ENCODE measurements at regions of chr11 and their contacts with region 1.

Region 1: GRCh38 chr11:61332797-61333549 is at the starts of genes DDB1 and TKFC:
- DNase-seq: peak; percentile 85
- ATAC-seq: peak; percentile 92
- H3K4me3 Mint-ChIP-seq: peak within 1 kb of the TSS; percentile 92
- H3K27ac Mint-ChIP-seq: peak within 1 kb of the TSS; percentile 93
- H3K4me1 Mint-ChIP-seq: peaks cover 49% of the 10 kb centered on the region
- H3K27me3 Mint-ChIP-seq: no peaks in the 10 kb centered on the region
- CTCF ChIP-seq: no peak
- total RNA-seq, gene DDB1: 201 and 218 TPM in 2 replicates
- total RNA-seq, gene TKFC: 59.8 and 63.9 TPM in 2 replicates

Region 2: GRCh38 chr11:61294717-61295595 is 38.0 kb before region 1 on chr11 and contains the start of gene VWCE:
- CTCF ChIA-PET with region 1: no interaction called
- POLR2A ChIA-PET with region 1: no interaction called
- intact Hi-C with region 1: loop called (anchors 1 kb)
- DNase-seq: peak; percentile 67
- ATAC-seq: peak; percentile 86
- H3K4me3 Mint-ChIP-seq: peak within 1 kb of the TSS; percentile 81
- H3K27ac Mint-ChIP-seq: no peak within 1 kb of the TSS
- H3K4me1 Mint-ChIP-seq: peaks cover 9% of the 10 kb centered on the region
- H3K27me3 Mint-ChIP-seq: peaks cover 10% of the 10 kb centered on the region
- CTCF ChIP-seq: no peak
- total RNA-seq, gene VWCE: 0.76 and 1.3 TPM in 2 replicates

Region 3: DNA sequence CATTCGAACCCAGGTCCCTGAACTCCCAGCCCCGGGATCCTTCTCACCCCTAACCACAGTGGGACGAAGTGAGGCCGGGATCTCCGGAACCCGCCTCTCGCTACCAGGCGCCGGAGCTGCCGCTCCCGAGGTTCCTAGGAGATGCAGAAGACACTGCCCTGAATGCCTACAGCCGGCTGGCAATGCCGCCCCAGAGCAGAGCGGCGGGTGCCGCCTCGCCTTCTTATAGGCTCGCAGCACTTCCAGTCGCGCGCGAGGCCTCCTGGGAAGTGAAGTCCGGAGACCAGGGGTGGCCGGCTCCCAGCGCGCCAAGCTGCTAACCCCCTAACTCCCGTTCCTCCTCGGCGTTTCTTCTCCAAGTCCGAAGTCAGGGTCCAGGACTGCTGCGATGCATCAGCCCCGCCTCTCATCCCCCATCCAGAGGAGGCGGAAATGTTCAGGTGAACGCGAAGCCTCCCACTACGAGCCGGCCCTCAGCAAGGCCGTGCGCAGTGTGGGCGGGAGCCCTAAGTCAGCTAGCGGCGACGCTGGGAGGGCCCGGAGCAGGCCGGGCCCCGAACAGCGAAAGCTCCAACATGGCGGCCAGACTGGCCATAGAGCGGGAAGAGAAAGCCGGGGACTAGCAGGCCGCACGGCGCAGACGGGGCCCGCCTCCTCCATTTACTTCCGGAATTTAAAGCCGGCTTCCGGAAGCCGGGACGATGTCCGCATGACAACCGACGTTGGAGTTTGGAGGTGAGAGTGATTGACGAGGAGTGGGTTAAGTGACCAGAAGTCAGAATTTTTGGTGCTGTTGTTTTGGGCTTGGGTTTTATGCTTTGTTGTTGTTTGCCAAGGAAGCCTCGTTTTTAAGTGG is 28.9 kb after region 1 on chr11 and contains the starts of genes CYB561A3 and TMEM138:
- CTCF ChIA-PET with region 1: interaction called, 126 read pairs
- POLR2A ChIA-PET with region 1: interaction called, 224 read pairs
- intact Hi-C with region 1: loop called (anchors 1 kb)
- DNase-seq: peak; percentile 84
- ATAC-seq: peak; percentile 76
- H3K4me3 Mint-ChIP-seq: peak within 1 kb of the TSS; percentile 100
- H3K27ac Mint-ChIP-seq: peak within 1 kb of the TSS; percentile 98
- H3K4me1 Mint-ChIP-seq: peaks cover 59% of the 10 kb centered on the region
- H3K27me3 Mint-ChIP-seq: no peaks in the 10 kb centered on the region
- CTCF ChIP-seq: no peak
- total RNA-seq, gene CYB561A3: 397 and 433 TPM in 2 replicates
- total RNA-seq, gene TMEM138: 69.7 and 81.2 TPM in 2 replicates

Region 4: GRCh38 chr11:61369372-61370219 is 36.6 kb after region 1 on chr11:
- CTCF ChIA-PET with region 1: interaction called, 126 read pairs
- POLR2A ChIA-PET with region 1: interaction called, 224 read pairs
- intact Hi-C with region 1: no loop called
- DNase-seq: no peak
- ATAC-seq: no peak
- H3K4me3 Mint-ChIP-seq: no peak overlapping the region
- H3K27ac Mint-ChIP-seq: no peak overlapping the region
- H3K4me1 Mint-ChIP-seq: peaks cover 3% of the 10 kb centered on the region
- H3K27me3 Mint-ChIP-seq: no peaks in the 10 kb centered on the region
- CTCF ChIP-seq: no peak

Region 5: DNA sequence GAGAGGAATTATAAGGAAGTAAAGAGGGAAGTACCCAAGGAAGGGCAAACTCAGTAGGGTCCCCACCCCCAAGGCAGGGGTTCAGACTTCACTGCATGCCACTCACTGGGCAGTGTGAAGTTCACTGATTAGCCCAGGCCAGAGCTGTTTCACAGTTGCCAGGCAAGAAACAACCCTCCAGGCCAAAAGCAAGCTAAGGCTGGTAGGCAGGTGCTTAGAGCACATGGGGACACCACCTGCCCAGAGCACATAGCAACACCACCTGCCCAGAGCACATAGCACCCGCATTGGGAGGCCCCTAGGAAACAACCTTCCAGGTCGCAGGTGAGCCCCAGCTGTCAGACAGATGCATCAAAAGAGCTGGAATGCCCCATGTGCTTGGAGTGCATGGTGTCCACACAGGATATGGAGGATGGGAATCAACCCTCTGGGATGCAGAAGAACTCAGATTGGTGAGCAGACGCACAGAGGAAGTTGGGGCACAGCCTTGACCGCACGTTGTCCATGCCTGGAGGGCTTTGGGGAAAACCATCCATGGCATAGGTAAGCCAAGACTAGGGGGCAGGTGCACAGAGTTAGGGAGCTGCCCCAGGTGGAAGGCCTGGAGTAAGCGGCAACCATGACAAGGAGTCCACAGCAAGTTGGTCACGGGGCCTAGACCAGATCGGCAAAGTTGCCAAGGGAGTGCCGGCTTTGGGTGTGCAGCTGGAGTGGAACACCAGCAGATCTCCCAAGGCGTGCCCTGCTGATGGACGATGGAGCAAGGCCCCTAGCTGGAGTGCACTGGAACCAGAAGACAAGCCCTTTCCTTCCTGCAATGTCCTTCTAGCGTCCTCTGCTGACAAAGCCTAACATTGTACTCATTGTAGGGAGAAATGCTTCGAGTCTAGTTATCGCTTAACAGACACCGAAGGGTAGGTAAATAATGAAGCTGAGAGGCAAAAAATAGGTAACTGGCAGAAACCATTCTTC is 51.6 kb after region 1 on chr11:
- CTCF ChIA-PET with region 1: interaction called, 561 read pairs
- POLR2A ChIA-PET with region 1: interaction called, 120 read pairs
- intact Hi-C with region 1: loop called (anchors 1 kb)
- DNase-seq: no peak
- ATAC-seq: no peak
- H3K4me3 Mint-ChIP-seq: no peak overlapping the region
- H3K27ac Mint-ChIP-seq: peak overlapping the region; percentile 56
- H3K4me1 Mint-ChIP-seq: peaks cover 10% of the 10 kb centered on the region
- H3K27me3 Mint-ChIP-seq: no peaks in the 10 kb centered on the region
- CTCF ChIP-seq: no peak

Region 6: GRCh38 chr11:61392981-61393595 is 60.1 kb after region 1 on chr11:
- CTCF ChIA-PET with region 1: interaction called, 561 read pairs
- POLR2A ChIA-PET with region 1: interaction called, 43 read pairs
- intact Hi-C with region 1: loop called (anchors 2 kb)
- DNase-seq: no peak
- ATAC-seq: peak; percentile 42
- H3K4me3 Mint-ChIP-seq: peak overlapping the region; percentile 97
- H3K27ac Mint-ChIP-seq: peak overlapping the region; percentile 96
- H3K4me1 Mint-ChIP-seq: peaks cover 26% of the 10 kb centered on the region
- H3K27me3 Mint-ChIP-seq: no peaks in the 10 kb centered on the region
- CTCF ChIP-seq: no peak

Region 7: DNA sequence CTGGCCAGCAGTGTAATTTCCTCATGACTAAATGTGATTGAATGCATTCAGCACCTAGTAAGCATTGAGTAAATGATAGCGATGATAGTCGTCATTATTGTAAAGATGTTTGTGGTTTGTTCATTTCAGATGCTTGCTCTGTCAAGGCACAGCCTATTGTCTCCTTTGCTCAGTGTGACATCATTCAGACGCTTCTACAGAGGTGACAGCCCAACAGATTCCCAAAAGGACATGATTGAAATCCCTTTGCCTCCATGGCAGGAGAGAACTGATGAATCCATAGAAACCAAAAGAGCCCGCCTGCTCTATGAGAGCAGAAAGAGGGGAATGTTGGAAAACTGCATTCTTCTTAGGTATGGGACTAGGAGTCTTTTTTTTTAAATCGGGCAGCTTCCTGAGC is 104.5 kb after region 1 on chr11:
- CTCF ChIA-PET with region 1: interaction called, 29 read pairs
- POLR2A ChIA-PET with region 1: no interaction called
- intact Hi-C with region 1: loop called (anchors 1 kb)
- DNase-seq: no peak
- ATAC-seq: no peak
- H3K4me3 Mint-ChIP-seq: no peak overlapping the region
- H3K27ac Mint-ChIP-seq: no peak overlapping the region
- H3K4me1 Mint-ChIP-seq: peaks cover 25% of the 10 kb centered on the region
- H3K27me3 Mint-ChIP-seq: no peaks in the 10 kb centered on the region
- CTCF ChIP-seq: no peak